Activated CD8-positive, alpha-beta T cell treated with anti-CD3 and anti-CD28 coated beads, Interleukin-2, amount 10 ng/mL, durations not matched to agents 7 days and 5 days (primary cell): ENCODE measurements at regions of chr10 and their contacts with region 1.

Region 1: GRCh38 chr10:69914398-69915214 is 112.9 kb downstream of the COL13A1 start:
- DNase-seq: peak; percentile 78
- ATAC-seq: peak; percentile 75
- H3K4me3 Mint-ChIP-seq: no peak overlapping the region
- H3K27ac Mint-ChIP-seq: no peak overlapping the region
- H3K4me1 Mint-ChIP-seq: no peaks in the 10 kb centered on the region
- H3K27me3 Mint-ChIP-seq: peaks cover 5% of the 10 kb centered on the region

Region 2: DNA sequence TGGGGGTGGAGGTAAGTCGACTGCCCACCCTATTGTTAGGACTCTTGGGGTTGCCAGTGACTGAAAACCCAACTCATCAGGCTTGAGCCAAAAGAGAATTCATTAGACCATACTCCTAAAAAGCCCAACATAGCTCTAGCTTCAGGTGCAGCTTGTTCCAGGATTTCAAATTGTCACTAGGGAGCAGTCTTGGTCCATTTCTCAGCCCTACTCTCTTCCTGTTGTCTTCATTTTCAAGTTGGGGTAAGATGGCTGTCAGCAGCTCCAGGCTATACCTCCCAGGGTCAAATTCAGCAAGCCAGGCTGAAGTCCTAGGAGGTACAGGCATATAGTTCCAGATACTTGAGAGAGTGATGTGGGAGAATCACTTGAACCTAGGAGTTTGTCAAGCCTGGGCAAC is 127.8 kb before region 1 on chr10:
- CTCF ChIA-PET with region 1: interaction called, 27 read pairs
- POLR2A ChIA-PET with region 1: no interaction called
- DNase-seq: no peak
- ATAC-seq: no peak
- H3K4me3 Mint-ChIP-seq: no peak overlapping the region
- H3K27ac Mint-ChIP-seq: no peak overlapping the region
- H3K4me1 Mint-ChIP-seq: peaks cover 2% of the 10 kb centered on the region
- H3K27me3 Mint-ChIP-seq: peaks cover 16% of the 10 kb centered on the region

Region 3: GRCh38 chr10:69901628-69902505 is 12.7 kb before region 1 on chr10:
- CTCF ChIA-PET with region 1: interaction called, 18 read pairs
- POLR2A ChIA-PET with region 1: no interaction called
- DNase-seq: peak; percentile 30
- ATAC-seq: no peak
- H3K4me3 Mint-ChIP-seq: no peak overlapping the region
- H3K27ac Mint-ChIP-seq: no peak overlapping the region
- H3K4me1 Mint-ChIP-seq: no peaks in the 10 kb centered on the region
- H3K27me3 Mint-ChIP-seq: no peaks in the 10 kb centered on the region

Region 4: DNA sequence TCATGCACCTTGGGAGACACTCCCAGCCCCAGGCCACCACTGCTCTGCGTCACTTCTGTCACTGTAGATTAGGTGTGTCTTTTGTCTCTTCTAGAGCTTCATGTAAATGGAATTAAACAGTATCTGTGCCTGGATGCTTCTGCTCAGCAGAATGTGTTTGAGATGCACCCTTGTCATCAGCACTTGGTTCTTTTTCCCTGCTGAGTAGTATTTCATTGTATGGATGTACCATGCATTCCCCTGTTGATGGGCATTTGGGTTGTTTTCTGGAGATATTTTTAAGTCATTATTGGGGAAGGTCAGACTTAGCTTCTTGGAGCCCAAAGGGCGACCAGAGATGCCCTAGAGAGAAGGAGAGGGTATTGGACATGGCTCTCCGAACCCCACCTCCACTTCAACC is 13.7 kb after region 1 on chr10:
- CTCF ChIA-PET with region 1: interaction called, 10 read pairs
- POLR2A ChIA-PET with region 1: no interaction called
- DNase-seq: no peak
- ATAC-seq: no peak
- H3K4me3 Mint-ChIP-seq: no peak overlapping the region
- H3K27ac Mint-ChIP-seq: no peak overlapping the region
- H3K4me1 Mint-ChIP-seq: no peaks in the 10 kb centered on the region
- H3K27me3 Mint-ChIP-seq: peaks cover 2% of the 10 kb centered on the region

Region 5: GRCh38 chr10:70418229-70418628 is 503.6 kb after region 1 on chr10:
- CTCF ChIA-PET with region 1: no interaction called
- POLR2A ChIA-PET with region 1: no interaction called
- DNase-seq: no peak
- ATAC-seq: no peak
- H3K4me3 Mint-ChIP-seq: no peak overlapping the region
- H3K27ac Mint-ChIP-seq: no peak overlapping the region
- H3K4me1 Mint-ChIP-seq: peaks cover 24% of the 10 kb centered on the region
- H3K27me3 Mint-ChIP-seq: no peaks in the 10 kb centered on the region